Caco-2 (cell line): ENCODE measurements at regions of chr3 and their contacts with region 1.

Region 1: GRCh38 chr3:48232734-48233133 is 8.2 kb upstream of the ZNF589 start:
- DNase-seq: peak; percentile 85 to 87
- H3K4me3 ChIP-seq: no peak overlapping the region
- H3K4me3 Mint-ChIP-seq: peak overlapping the region; percentile 49
- H3K27ac Mint-ChIP-seq: peak overlapping the region; percentile 68
- H3K4me1 ChIP-seq: peaks cover 9% of the 10 kb centered on the region
- H3K4me1 Mint-ChIP-seq: peaks cover 18% of the 10 kb centered on the region
- H3K27me3 ChIP-seq: no peaks in the 10 kb centered on the region
- H3K27me3 Mint-ChIP-seq: no peaks in the 10 kb centered on the region
- CTCF ChIP-seq: peak; percentile 59 to 69

Region 2: DNA sequence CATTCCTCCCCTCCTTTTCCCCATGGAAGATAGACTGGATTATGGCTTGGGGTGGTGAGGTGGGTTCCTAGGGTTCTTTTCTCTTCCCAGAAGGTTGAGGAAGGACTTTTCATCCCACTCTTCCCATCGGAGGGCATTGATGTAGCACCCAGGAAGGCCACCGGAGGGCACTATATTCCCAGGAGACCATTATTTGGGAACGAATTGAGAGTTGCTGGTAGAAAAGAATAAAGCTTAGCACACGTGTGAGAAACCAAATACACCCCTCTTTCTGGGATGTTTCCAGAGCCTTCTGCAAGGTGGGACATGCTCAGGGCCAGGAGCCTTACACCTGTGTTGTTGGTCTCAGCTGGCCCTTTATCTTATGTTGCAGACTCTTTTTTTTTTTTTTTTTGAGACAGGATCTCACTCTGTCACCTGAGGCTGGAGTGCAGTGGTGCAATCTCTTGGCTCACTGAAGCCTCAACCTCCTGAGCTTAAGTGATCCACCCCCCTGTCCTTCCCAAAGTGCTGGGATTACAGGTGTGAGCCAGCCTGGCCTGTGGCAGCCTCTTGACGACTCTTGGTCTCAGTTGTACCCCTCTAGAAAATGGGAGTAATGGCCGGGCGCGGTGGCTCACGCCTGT is 38.2 kb before region 1 on chr3:
- CTCF ChIA-PET with region 1: interaction called, 3 read pairs
- POLR2A ChIA-PET with region 1: no interaction called
- intact Hi-C with region 1: loop called (anchors 1 kb)
- DNase-seq: peak; percentile 63 to 79
- H3K4me3 ChIP-seq: no peak overlapping the region
- H3K4me3 Mint-ChIP-seq: no peak overlapping the region
- H3K27ac Mint-ChIP-seq: no peak overlapping the region
- H3K4me1 ChIP-seq: peaks cover 4% of the 10 kb centered on the region; the same call in 1 of the 2 replicates
- H3K4me1 Mint-ChIP-seq: no peaks in the 10 kb centered on the region
- H3K27me3 ChIP-seq: no peaks in the 10 kb centered on the region
- H3K27me3 Mint-ChIP-seq: no peaks in the 10 kb centered on the region
- CTCF ChIP-seq: peak; percentile 72 to 85

Region 3: DNA sequence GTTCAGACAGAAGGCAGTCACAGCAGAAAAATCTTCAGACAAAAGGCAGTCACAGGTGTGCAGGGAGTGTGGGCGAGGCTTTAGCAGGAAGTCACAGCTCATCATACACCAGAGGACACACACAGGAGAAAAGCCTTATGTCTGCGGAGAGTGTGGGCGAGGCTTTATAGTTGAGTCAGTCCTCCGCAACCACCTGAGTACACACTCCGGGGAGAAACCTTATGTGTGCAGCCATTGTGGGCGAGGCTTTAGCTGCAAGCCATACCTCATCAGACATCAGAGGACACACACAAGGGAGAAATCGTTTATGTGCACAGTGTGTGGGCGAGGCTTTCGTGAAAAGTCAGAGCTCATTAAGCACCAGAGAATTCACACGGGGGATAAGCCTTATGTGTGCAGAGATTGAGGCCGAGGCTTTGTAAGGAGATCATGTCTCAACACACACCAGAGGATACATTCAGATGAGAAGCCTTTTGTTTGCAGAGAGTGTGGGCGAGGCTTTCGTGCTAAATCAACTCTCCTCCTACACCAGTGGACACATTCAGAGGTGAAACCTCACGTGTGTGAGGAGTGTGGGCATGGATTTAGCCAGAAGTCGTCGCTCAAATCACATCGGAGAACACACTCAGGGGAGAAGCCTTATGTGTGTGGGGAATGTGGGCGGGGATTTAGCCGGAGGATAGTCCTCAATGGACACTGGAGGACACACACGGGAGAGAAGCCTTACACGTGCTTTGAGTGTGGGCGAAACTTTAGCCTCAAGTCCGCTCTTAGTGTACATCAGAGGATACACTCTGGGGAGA is 35.8 kb after region 1 on chr3:
- CTCF ChIA-PET with region 1: no interaction called
- POLR2A ChIA-PET with region 1: no interaction called
- intact Hi-C with region 1: loop called (anchors 2 kb)
- DNase-seq: peak; percentile 53 to 60
- H3K4me3 ChIP-seq: no peak overlapping the region
- H3K4me3 Mint-ChIP-seq: peak overlapping the region; percentile 48
- H3K27ac Mint-ChIP-seq: peak overlapping the region; percentile 72
- H3K4me1 ChIP-seq: peaks cover 16% of the 10 kb centered on the region
- H3K4me1 Mint-ChIP-seq: peaks cover 25% of the 10 kb centered on the region
- H3K27me3 ChIP-seq: no peaks in the 10 kb centered on the region
- H3K27me3 Mint-ChIP-seq: no peaks in the 10 kb centered on the region
- CTCF ChIP-seq: no peak

Region 4: GRCh38 chr3:48429317-48429959 is 196.7 kb after region 1 on chr3:
- CTCF ChIA-PET with region 1: no interaction called
- POLR2A ChIA-PET with region 1: interaction called, 6 read pairs
- intact Hi-C with region 1: loop called (anchors 1 kb)
- DNase-seq: peak; percentile 87
- H3K4me3 ChIP-seq: peak overlapping the region; percentile 84
- H3K4me3 Mint-ChIP-seq: peak overlapping the region; percentile 98
- H3K27ac Mint-ChIP-seq: no peak overlapping the region
- H3K4me1 ChIP-seq: peaks cover 65% of the 10 kb centered on the region
- H3K4me1 Mint-ChIP-seq: peaks cover 52% of the 10 kb centered on the region
- H3K27me3 ChIP-seq: no peaks in the 10 kb centered on the region
- H3K27me3 Mint-ChIP-seq: no peaks in the 10 kb centered on the region
- CTCF ChIP-seq: no peak